ENCODE measurements at regions of chr2 and their contacts with region 1.

Region 1: GRCh38 chr2:171433763-171434670 is at the starts of genes DCAF17 and METTL8:
- DNase-seq: peak; percentile 96
- H3K4me3 Mint-ChIP-seq: peak within 1 kb of the TSS; percentile 92
- H3K27ac Mint-ChIP-seq: peak within 1 kb of the TSS; percentile 92
- H3K4me1 Mint-ChIP-seq: peaks cover 57% of the 10 kb centered on the region
- H3K27me3 Mint-ChIP-seq: no peaks in the 10 kb centered on the region
- total RNA-seq, gene DCAF17: 14.1 to 14.7 TPM
- total RNA-seq, gene METTL8: 33.3 to 40.9 TPM

Region 2: DNA sequence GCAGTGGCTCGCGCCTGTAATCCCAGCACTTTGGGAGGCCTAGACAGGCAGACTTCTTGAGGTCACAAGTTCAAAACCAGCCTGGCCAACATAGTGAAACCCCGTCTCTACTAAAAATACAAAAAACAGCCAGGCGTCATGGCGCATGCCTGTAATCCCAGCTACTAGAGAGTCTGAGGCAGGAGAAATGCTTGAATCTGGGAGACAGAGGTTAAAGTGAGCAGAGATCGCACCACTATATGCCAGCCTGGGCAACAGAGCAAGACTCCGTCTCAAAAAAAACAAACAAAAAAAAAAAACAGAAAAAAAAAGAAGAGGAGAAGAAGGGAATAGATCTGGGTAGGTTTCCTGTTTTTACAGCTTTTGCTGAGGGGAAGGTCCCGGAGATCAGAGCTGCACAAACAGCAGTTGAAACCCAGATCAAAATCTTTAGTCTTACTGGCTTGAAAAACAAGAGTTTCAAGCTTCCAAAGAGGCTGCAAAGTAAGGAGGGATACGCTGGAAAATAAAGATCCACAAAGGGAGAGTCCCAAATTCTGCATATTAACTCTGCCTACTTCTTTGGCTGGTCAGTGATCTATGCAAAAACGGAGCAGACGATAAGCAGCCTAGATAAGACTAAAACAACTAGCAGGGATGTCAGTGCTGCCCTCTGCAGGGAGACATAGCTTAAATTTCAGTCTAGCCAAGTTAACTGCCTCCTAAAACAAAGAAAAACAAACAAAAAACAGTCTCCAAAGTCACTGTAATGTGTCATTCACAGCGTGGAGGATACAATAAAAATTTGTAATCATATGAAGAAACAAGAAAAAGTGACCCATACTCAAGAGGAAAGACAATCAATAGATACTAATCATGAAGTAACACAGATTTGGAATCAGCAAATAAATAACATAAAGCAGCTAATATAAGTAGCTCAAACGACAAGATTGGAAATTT is 347.4 kb before region 1 on chr2:
- CTCF ChIA-PET with region 1: interaction called, 6 read pairs
- POLR2A ChIA-PET with region 1: interaction called, 4 read pairs
- intact Hi-C with region 1: loop called (anchors 5 kb)
- DNase-seq: peak; percentile 66
- H3K4me3 Mint-ChIP-seq: peak overlapping the region; percentile 64
- H3K27ac Mint-ChIP-seq: peak overlapping the region; percentile 43
- H3K4me1 Mint-ChIP-seq: peaks cover 58% of the 10 kb centered on the region
- H3K27me3 Mint-ChIP-seq: no peaks in the 10 kb centered on the region

Region 3: DNA sequence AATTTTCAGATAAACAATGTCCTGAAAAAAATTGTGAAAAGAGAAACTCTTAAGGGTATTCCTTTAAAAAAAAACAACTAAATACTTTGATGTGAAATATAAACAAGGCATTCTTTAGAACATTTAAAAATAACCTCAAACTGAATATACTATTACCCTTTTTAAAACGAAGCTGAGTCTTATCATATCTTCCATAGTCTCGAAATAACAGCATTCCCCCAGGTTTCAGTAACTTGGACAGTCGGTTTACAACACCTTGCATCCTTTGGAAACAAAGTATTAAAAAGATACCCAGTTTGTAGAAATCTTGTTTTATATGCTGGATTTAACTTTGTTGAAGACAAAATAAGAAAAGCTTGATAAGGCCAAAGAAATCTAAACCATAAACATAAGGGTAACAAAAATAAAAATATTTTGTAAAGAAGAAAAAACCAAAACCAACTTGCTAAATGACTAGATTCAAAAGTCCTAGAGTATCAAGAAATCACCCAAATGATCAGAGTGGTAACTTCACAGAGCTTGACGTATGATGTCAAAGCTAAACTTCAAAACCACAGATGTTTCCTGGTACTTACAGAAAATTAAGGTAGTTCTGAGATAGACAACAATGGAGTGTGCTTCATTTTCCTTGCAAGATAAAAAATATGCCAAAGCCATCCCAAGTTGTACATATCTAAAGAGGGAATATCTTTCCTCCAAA is 108.0 kb before region 1 on chr2:
- CTCF ChIA-PET with region 1: no interaction called
- POLR2A ChIA-PET with region 1: interaction called, 13 read pairs
- intact Hi-C with region 1: no loop called
- DNase-seq: no peak
- H3K4me3 Mint-ChIP-seq: peak overlapping the region; percentile 50
- H3K27ac Mint-ChIP-seq: peak overlapping the region; percentile 66
- H3K4me1 Mint-ChIP-seq: peaks cover 50% of the 10 kb centered on the region
- H3K27me3 Mint-ChIP-seq: no peaks in the 10 kb centered on the region

Region 4: GRCh38 chr2:171491292-171491691 is 57.3 kb after region 1 on chr2:
- CTCF ChIA-PET with region 1: no interaction called
- POLR2A ChIA-PET with region 1: no interaction called
- intact Hi-C with region 1: no loop called
- DNase-seq: no peak
- H3K4me3 Mint-ChIP-seq: no peak overlapping the region
- H3K27ac Mint-ChIP-seq: no peak overlapping the region
- H3K4me1 Mint-ChIP-seq: no peaks in the 10 kb centered on the region
- H3K27me3 Mint-ChIP-seq: no peaks in the 10 kb centered on the region

Measured in activated CD4-positive, alpha-beta memory T cell treated with anti-CD3 and anti-CD28 coated beads for 36 hours (primary cell).